A549 (cell line): ENCODE measurements at regions of chr12 and their contacts with region 1.

Region 1: DNA sequence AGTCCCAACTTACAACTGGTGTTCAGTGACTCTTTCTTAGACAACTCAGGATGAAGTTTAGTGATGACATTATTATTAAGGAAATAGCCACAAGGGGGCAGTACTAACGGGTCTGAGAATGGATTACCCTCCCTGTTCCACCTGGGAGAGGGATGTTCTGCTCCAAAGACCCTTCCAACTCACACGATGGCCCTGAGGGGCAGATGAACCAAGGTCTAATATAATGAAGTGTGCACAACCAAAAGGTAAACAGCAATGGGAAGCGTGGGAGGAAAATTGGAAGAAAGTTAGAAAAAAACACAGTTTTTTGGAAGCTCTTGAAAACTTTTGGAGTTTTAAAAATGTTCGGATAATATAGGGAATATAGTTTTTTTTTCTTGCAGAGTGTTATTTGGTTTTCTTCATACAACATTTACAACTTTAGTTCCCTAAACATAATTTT is 24.0 kb downstream of the FGF6 start:
- DNase-seq: peak; percentile 41 to 57
- ATAC-seq: peak; percentile 64 to 84; a peak in 4 of 6 replicates
- H3K4me3 ChIP-seq: no peak overlapping the region
- H3K27ac ChIP-seq: no peak overlapping the region
- H3K4me1 ChIP-seq: no peaks in the 10 kb centered on the region
- CTCF ChIP-seq: peak; percentile 70
- EP300 ChIP-seq: no peak
- POLR2A ChIP-seq: no peak
- RAD21 ChIP-seq: peak; percentile 44 to 50; a peak in 3 of 5 replicates

Region 2: DNA sequence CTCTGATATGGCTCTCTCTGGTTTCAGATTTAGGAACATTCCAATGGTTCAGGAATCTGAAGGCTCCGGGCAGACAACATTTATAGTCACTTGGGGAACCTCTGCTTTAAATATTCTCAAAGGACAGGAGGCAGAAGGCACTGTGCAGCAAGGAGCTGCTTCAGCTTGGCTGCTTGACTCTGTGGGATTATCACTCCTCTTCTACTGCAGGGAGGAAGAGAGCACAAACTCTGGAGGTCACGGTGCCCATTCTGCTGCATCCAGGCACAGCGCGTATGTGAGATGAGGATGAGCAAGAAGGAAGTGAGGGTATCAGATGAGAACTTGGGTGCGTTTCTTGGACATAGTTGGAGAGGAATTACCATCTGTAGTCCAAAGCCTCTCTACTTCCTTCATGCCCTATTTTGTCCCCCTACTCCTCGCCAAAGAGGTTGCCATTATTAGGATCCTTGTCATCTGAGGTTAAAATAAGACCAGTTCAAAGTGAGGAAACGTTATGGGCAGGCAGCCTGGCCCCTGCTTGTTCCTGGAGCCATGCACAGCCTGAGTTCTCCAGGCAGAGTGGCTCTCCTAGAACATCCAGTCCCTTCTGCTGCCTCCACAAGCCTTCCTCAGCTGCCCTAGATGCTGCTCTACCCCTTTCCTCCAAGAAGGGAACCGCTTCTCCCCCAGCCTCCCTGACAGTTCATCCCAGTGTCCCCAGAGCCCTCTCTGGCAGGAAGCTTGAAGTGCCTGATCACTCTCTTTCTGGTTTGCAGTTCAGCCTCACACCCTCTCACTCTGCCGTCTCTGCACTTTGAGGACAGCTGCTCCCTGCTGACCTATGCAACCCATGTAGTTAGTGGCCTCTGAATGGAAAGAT is 11.5 kb after region 1 on chr12:
- CTCF ChIA-PET with region 1: interaction called, 19 read pairs
- POLR2A ChIA-PET with region 1: no interaction called
- DNase-seq: no peak
- ATAC-seq: peak in 1 of 2 experiments; percentile 56; a peak in 2 of 6 replicates
- H3K4me3 ChIP-seq: no peak overlapping the region
- H3K27ac ChIP-seq: no peak overlapping the region
- H3K4me1 ChIP-seq: no peaks in the 10 kb centered on the region
- CTCF ChIP-seq: no peak
- EP300 ChIP-seq: no peak
- POLR2A ChIP-seq: no peak
- RAD21 ChIP-seq: no peak

Region 3: DNA sequence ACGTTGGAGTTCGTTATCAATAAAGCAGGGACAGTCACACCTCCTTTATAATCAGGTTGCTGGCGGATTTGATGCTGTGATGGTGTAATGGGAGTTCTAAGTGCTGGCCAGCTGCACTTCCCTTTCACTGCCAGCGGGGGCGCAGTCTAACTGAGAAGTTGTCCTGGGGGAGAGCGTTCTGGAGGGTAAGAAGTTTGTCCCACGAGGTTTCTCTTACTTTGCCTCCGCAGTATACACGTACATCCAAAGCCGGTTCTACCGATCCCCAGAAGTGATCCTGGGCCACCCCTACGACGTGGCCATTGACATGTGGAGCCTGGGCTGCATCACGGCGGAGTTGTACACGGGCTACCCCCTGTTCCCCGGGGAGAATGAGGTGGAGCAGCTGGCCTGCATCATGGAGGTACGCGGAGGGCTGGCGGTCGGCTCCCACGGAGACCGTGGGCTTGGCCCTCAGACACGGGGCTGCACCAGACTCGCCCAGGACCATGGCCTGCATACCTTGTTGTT is 183.1 kb after region 1 on chr12:
- CTCF ChIA-PET with region 1: no interaction called
- POLR2A ChIA-PET with region 1: no interaction called
- DNase-seq: peak; percentile 80 to 93
- ATAC-seq: peak; percentile 96 to 98
- H3K4me3 ChIP-seq: peak overlapping the region; percentile 83
- H3K27ac ChIP-seq: peak overlapping the region; percentile 81 to 89
- H3K4me1 ChIP-seq: peaks cover 5% of the 10 kb centered on the region; the same call in 1 of the 3 replicates
- CTCF ChIP-seq: peak; percentile 71
- EP300 ChIP-seq: no peak
- POLR2A ChIP-seq: peak; percentile 67
- RAD21 ChIP-seq: peak; percentile 45 to 62; a peak in 4 of 5 replicates